ENCODE measurements at regions of chr14 and their contacts with region 1.

Region 1: GRCh38 chr14:81464247-81465002 is 64.3 kb upstream of the STON2 start:
- DNase-seq: peak; percentile 68
- CTCF ChIP-seq: peak; percentile 80

Region 2: GRCh38 chr14:80987235-80988032 is 477.0 kb before region 1 on chr14:
- in situ Hi-C with region 1: loop called (anchors 25 kb)
- DNase-seq: peak; percentile 70
- CTCF ChIP-seq: peak; percentile 77

Region 3: DNA sequence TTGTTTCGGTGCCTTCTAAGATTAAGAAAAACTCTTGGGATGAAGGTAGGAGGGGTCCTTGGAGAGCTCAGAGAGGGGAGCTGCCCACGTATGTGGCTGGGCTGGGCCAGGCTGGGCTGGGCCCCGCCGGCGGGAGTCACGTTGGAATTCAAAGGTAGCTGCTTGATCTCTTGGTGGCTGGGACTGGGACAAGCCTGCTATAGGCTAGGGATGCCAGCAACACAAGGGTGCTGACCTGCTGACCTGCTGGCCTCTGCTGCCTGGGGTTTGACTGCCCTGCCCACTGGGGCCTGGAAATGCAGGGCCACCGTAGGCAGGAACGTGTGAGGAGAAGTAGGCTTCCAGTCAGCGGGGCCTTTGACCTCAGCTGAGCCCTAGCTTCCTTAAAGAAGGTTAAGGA is 190.9 kb before region 1 on chr14:
- in situ Hi-C with region 1: loop called (anchors 5 kb)
- DNase-seq: no peak
- CTCF ChIP-seq: no peak